ENCODE measurements at regions of chr5 and their contacts with region 1.

Region 1: DNA sequence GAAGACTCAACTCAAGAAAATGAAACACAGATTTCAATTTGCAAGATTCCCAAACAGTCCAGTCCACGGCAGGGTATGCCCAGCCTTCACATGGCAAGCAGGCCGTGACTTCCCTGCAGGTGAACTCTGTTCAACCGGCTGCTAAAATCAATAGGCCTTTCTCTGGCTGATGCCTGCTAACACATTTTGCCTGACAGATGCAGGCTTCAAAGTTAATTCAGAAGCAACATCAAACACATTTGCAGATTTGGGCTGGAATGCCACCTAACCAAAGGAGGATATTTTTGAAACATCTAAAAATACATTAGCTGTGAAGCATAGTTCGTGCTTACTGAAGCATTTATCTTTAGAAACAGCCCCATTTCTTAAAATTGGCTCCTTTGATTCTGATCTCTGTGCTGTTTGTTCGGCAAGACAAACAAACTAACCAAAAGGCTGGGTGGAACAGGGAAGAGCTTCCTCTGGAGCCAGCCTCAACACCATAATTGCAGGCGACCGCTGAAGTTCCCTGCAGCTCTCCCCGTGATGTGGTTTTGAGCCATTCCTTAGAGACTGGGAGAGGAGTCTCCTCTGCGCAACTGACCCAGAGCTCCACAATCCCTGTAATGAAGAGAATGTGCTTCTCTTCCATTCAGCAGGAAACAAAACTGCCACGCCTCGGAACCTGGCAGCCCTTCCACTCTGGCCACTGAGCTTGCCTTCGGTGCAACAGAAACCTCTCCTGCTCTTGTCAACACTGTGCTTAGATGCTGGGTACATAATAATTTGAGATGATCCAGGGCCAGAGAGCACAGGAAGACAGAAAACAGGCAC is 126.5 kb downstream of the MYO10 start:
- DNase-seq: no peak
- H3K4me3 ChIP-seq: no peak overlapping the region
- H3K27ac ChIP-seq: no peak overlapping the region
- H3K4me1 ChIP-seq: peaks cover 0 to 4% of the 10 kb centered on the region in 2 donors
- H3K27me3 ChIP-seq: no peaks in the 10 kb centered on the region
- CTCF ChIP-seq: no peak

Region 2: DNA sequence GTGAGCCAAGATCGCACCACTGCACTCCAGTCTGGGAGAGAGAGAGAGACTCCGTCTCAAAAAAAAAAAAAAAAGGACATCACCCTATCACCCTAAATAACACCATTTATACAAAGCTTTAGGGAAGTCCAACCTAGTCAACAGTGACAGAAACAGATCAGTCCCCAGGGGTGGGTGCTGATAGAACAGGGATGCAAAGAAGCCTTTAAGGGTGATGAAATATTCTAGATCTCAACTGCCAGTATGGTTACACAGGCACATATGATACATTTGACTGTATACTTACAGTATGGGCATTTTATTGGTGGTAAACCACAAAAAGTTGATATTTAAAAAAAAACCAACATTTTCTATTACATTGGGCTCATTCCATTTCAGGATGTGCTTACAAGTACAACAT is 197.6 kb before region 1 on chr5:
- intact Hi-C with region 1: no loop called
- DNase-seq: no peak
- H3K4me3 ChIP-seq: no peak overlapping the region
- H3K27ac ChIP-seq: no peak overlapping the region
- H3K4me1 ChIP-seq: peaks cover 0 to 6% of the 10 kb centered on the region in 2 donors
- H3K27me3 ChIP-seq: no peaks in the 10 kb centered on the region
- CTCF ChIP-seq: no peak

Region 3: GRCh38 chr5:16936150-16936920 is 126.7 kb after region 1 on chr5 and contains the start of gene MYO10:
- intact Hi-C with region 1: loop called (anchors 5 kb)
- DNase-seq: peak in 1 of 2 donors; percentile 79
- H3K4me3 ChIP-seq: peak within 1 kb of the TSS; percentile 56 to 88
- H3K27ac ChIP-seq: peak within 1 kb of the TSS; percentile 55 to 56
- H3K4me1 ChIP-seq: no peaks in the 10 kb centered on the region
- H3K27me3 ChIP-seq: no peaks in the 10 kb centered on the region
- CTCF ChIP-seq: no peak
- total RNA-seq, gene MYO10: 20.0 TPM

Measured in ascending aorta (tissue), 2 donors.